ENCODE measurements at regions of chr16 and their contacts with region 1.

Region 1: GRCh38 chr16:81366316-81366932 is 51.7 kb downstream of the GAN start:
- DNase-seq: peak; percentile 59
- CTCF ChIP-seq: peak; percentile 66

Region 2: GRCh38 chr16:81189100-81189664 is 177.2 kb before region 1 on chr16:
- CTCF ChIA-PET with region 1: no interaction called
- POLR2A ChIA-PET with region 1: no interaction called
- DNase-seq: no peak
- CTCF ChIP-seq: no peak

Region 3: GRCh38 chr16:81353895-81354294 is 12.5 kb before region 1 on chr16:
- CTCF ChIA-PET with region 1: interaction called, 25 read pairs
- POLR2A ChIA-PET with region 1: no interaction called
- DNase-seq: no peak
- CTCF ChIP-seq: no peak

Region 4: GRCh38 chr16:81696961-81697615 is 330.7 kb after region 1 on chr16:
- CTCF ChIA-PET with region 1: interaction called, 10 read pairs
- POLR2A ChIA-PET with region 1: no interaction called
- DNase-seq: peak; percentile 73
- CTCF ChIP-seq: peak; percentile 75

Region 5: DNA sequence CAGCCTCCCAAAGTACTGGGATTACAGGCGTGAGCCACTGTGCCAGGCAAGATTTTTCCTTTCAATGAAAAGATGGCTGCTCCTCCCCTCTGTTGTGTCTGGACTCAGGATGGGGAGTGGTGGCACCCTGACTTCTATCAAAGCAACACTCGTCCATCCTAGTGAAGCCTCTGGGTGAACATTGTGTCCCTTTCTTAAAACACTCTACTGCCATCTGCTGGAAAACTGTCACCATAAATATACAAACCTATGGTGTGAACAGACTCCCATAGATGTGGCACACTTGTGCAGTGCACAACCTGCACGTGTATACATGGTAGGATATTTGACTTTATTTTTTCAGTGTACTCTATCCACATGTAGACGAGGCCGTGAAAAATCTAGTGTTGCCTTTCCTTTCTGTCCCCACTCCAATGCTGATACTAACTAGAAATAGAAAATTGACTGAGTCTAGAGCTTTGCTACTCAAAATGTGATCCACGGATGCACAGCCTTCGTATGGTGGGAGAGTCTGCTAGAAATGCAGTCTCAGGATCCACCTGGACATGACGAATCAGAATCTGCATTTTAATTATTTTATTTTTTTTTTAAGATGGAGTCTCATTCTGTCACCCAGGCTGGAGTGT is 356.8 kb after region 1 on chr16:
- CTCF ChIA-PET with region 1: interaction called, 35 read pairs
- POLR2A ChIA-PET with region 1: no interaction called
- DNase-seq: peak; percentile 72
- CTCF ChIP-seq: peak; percentile 48

Region 6: DNA sequence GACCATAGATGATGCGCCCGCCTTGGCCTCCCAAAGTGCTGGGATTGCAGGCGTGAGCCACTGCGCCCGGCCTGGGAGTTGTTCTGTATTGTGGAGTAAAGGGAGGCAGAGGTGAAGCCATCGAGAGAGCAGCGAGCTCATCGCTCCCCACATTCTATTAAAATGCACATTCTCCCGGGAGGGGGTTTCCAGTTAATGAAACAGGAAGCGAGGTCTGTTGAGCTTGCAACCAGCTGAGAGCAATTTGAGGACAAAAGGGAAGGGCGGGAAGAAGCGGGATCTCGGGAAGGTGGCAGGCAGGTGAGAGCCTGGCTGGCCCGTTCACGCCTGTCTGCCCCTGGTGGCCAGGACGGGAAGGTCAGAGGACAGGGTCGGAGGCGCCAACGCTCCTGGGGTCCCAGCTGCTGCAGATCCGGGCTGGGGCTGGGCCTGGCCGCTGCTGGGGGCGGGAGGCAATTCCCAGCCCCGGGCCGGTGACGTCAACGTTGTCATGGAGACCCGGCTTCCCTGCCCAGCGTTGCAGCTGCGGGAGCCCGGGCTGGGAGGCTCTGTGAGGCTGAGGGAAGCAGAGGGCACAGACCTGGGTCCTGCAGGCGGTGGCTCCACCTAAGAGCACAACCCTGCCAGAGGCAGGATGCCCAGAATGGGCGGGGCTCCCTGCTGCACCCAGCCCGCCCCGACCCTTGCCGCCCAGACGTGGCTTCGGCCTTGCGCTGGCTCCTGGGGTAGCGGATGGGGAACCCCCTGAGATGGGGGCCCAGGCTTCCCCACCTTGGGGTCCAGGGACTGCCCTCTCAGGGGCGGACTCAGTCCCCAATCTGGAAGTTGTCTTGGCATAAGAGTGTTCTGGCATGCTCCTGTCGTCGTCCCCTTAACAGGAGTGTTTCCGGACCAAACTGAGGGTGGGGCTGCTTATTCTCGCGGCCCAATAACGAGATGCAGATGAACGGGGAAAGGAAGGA is 363.9 kb after region 1 on chr16:
- CTCF ChIA-PET with region 1: interaction called, 10 read pairs
- POLR2A ChIA-PET with region 1: no interaction called
- DNase-seq: peak; percentile 79
- CTCF ChIP-seq: peak; percentile 65

Region 7: GRCh38 chr16:81737885-81738786 is 371.7 kb after region 1 on chr16:
- CTCF ChIA-PET with region 1: interaction called, 35 read pairs
- POLR2A ChIA-PET with region 1: no interaction called
- DNase-seq: peak; percentile 87
- CTCF ChIP-seq: peak; percentile 91

Measured in GM10248 (cell line).